ENCODE measurements at regions of chr20 and their contacts with region 1.

Region 1: GRCh38 chr20:45311589-45312211 is 3.6 kb upstream of the MATN4 start:
- DNase-seq: peak in 40 of 42 donors; percentile 32 to 80 (median 63)

Region 2: DNA sequence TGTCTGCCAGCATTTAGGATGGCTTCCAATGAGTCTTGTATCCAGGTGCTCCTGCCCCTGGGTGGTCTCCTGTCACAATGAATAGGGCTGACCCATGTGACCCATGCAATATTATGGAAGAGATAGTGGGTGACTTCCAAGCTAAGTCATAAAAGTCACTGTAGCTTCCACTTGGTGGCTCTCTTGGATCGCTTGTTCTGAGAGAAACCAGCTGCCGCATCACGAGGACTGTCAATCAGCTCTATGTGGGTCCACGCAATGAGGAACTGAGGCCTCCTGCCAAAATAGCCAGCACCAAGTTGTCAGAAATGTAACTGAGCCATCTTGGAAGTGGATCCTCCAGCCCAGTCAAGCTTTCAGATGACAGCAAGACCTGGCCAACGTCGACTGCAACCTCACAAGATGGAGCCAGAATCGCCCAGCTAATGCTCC is 11.3 kb after region 1 on chr20:
- intact Hi-C with region 1: no loop called
- DNase-seq: peak in 39 of 42 donors; percentile 36 to 81 (median 66)

Region 3: GRCh38 chr20:45347936-45348778 is 36.5 kb after region 1 on chr20 and contains the start of gene SDC4:
- intact Hi-C with region 1: no loop called
- DNase-seq: peak in 35 of 42 donors; percentile 32 to 79 (median 56)

Region 4: DNA sequence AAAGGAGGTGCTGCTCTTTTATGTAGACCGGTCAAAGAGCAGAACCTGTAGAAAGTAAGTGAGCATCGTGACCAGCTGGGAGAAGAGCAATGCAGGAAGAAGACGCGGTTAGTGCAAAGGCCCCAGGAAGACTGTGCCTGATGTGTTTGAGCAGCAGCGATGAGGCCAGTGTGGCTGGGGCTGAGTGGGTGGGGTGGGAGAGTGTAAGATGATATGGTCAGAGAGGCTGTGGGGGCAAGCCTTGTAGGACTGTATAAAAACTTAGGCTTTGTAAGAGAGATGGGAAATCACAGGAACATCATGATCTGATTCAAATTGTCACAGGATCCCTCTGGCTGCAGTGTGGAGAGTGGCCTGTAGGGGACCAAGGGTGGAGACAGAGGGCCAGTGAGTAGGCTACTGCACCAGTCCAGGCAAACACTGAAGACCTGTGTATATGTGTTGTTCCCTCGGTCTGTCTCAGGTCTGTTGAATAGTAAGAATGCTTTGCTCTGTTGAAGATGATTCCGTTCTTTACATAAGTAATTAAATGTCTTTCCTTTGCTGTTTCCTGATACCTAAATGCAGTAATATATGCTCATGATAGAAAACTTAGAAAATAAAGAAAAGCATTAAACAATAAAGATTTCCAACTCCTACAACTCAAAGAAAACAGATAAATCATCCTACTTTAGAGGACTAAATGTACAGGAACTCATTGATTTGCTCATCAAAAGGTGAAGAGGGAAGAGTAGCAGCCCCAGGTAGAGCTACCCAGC is 134.3 kb after region 1 on chr20:
- intact Hi-C with region 1: loop called (anchors 5 kb)
- DNase-seq: no peak

Measured in head of caudate nucleus (tissue), 42 donors.